ENCODE measurements at regions of chr20 and their contacts with region 1.

Region 1: DNA sequence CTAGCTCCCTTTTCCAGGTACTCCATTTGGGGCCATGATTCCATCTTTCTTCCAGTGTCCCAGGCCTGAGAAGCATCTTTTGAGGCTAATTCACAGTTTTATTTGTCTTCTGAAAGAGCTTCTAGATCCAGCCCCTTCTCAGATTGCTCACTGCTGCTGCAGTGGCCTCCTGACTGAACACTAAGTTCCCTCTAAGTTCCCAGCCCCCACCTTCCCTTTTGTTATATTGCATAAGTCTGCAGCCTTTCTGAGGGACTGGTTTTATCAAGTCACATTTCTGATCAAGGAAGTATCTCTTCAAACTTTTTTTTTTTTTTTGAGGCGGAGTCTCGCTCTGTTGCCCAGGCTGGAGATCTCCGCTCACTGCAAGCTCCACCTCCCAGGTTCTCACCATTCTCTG is 10.7 kb downstream of the MAPRE1 start:
- DNase-seq: no peak
- ATAC-seq: no peak
- H3K4me3 ChIP-seq: no peak overlapping the region
- H3K27ac ChIP-seq: no peak overlapping the region
- H3K4me1 ChIP-seq: no peaks in the 10 kb centered on the region
- H3K27me3 ChIP-seq: no peaks in the 10 kb centered on the region
- CTCF ChIP-seq: no peak
- EP300 ChIP-seq: no peak
- POLR2A ChIP-seq: no peak
- RAD21 ChIP-seq: no peak

Region 2: DNA sequence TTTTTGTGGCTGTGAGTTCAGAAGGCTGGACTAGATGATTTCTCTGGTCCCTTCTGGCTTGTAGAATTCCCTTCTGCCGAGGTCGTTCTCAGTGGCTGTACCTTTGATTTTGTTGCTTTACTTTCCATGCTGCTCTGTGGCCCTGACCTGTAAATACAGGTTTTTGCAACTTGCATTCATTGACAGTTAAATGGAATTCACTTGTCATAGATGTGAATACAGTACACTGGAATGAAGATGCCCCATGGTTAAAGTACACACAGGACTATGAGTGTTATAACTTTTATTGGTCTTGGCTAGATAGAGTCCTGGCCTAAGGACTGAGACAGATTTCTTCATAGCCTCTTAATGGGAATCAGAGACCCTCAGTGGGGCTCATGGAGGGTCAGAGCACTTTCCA is 15.3 kb after region 1 on chr20:
- CTCF ChIA-PET with region 1: no interaction called
- POLR2A ChIA-PET with region 1: interaction called, 23 read pairs
- in situ Hi-C with region 1: no loop called
- intact Hi-C with region 1: no loop called
- DNase-seq: no peak
- ATAC-seq: no peak
- H3K4me3 ChIP-seq: no peak overlapping the region
- H3K27ac ChIP-seq: no peak overlapping the region
- H3K4me1 ChIP-seq: no peaks in the 10 kb centered on the region
- H3K27me3 ChIP-seq: no peaks in the 10 kb centered on the region
- CTCF ChIP-seq: no peak
- EP300 ChIP-seq: no peak
- POLR2A ChIP-seq: no peak
- RAD21 ChIP-seq: no peak

Measured in K562 (cell line).